ENCODE measurements at regions of chr7 and their contacts with region 1.

Region 1: GRCh38 chr7:105876091-105876963 is at the start of gene ATXN7L1:
- DNase-seq: peak; percentile 83 to 96 (median 92)
- ATAC-seq: peak; percentile 90
- H3K4me3 ChIP-seq: peak within 1 kb of the TSS; percentile 96
- H3K4me3 Mint-ChIP-seq: peak within 1 kb of the TSS; percentile 99
- H3K27ac ChIP-seq: peak within 1 kb of the TSS; percentile 55 to 77
- H3K27ac Mint-ChIP-seq: peak within 1 kb of the TSS; percentile 98
- H3K4me1 ChIP-seq: peaks cover 47% of the 10 kb centered on the region
- H3K4me1 Mint-ChIP-seq: peaks cover 81% of the 10 kb centered on the region
- H3K27me3 ChIP-seq: no peaks in the 10 kb centered on the region
- H3K27me3 Mint-ChIP-seq: no peaks in the 10 kb centered on the region
- CTCF ChIP-seq: peak; percentile 12
- total RNA-seq, gene ATXN7L1: 27.3 to 29.2 TPM

Region 2: GRCh38 chr7:105652359-105652993 is 223.9 kb before region 1 on chr7:
- CTCF ChIA-PET with region 1: interaction called, 3 read pairs
- POLR2A ChIA-PET with region 1: interaction called, 4 read pairs
- intact Hi-C with region 1: loop called (anchors 5 kb)
- DNase-seq: peak; percentile 55 to 74 (median 66)
- ATAC-seq: peak; percentile 94
- H3K4me3 ChIP-seq: no peak overlapping the region
- H3K4me3 Mint-ChIP-seq: no peak overlapping the region
- H3K27ac ChIP-seq: no peak overlapping the region
- H3K27ac Mint-ChIP-seq: no peak overlapping the region
- H3K4me1 ChIP-seq: peaks cover 10% of the 10 kb centered on the region
- H3K4me1 Mint-ChIP-seq: peaks cover 11% of the 10 kb centered on the region
- H3K27me3 ChIP-seq: no peaks in the 10 kb centered on the region
- H3K27me3 Mint-ChIP-seq: no peaks in the 10 kb centered on the region
- CTCF ChIP-seq: peak; percentile 75

Region 3: GRCh38 chr7:105759670-105760550 is 116.4 kb before region 1 on chr7:
- CTCF ChIA-PET with region 1: interaction called, 6 read pairs
- POLR2A ChIA-PET with region 1: interaction called, 8 read pairs
- intact Hi-C with region 1: loop called (anchors 2 to 5 kb)
- DNase-seq: peak in 7 of 14 experiments; percentile 8 to 54 (median 49)
- ATAC-seq: peak; percentile 25
- H3K4me3 ChIP-seq: no peak overlapping the region
- H3K4me3 Mint-ChIP-seq: no peak overlapping the region
- H3K27ac ChIP-seq: no peak overlapping the region
- H3K27ac Mint-ChIP-seq: peak overlapping the region; percentile 45
- H3K4me1 ChIP-seq: peaks cover 45% of the 10 kb centered on the region
- H3K4me1 Mint-ChIP-seq: peaks cover 35% of the 10 kb centered on the region
- H3K27me3 ChIP-seq: no peaks in the 10 kb centered on the region
- H3K27me3 Mint-ChIP-seq: no peaks in the 10 kb centered on the region
- CTCF ChIP-seq: peak; percentile 76

Region 4: GRCh38 chr7:105924945-105925344 is 48.6 kb after region 1 on chr7:
- CTCF ChIA-PET with region 1: interaction called, 4 read pairs
- POLR2A ChIA-PET with region 1: interaction called, 16 read pairs
- intact Hi-C with region 1: loop called in 1 of 2 experiments (anchors 5 kb)
- DNase-seq: peak in 6 of 14 experiments; percentile 2 to 66 (median 38)
- ATAC-seq: peak; percentile 87
- H3K4me3 ChIP-seq: no peak overlapping the region
- H3K4me3 Mint-ChIP-seq: peak overlapping the region; percentile 22
- H3K27ac ChIP-seq: no peak overlapping the region
- H3K27ac Mint-ChIP-seq: peak overlapping the region; percentile 87
- H3K4me1 ChIP-seq: peaks cover 16% of the 10 kb centered on the region
- H3K4me1 Mint-ChIP-seq: peaks cover 41% of the 10 kb centered on the region
- H3K27me3 ChIP-seq: no peaks in the 10 kb centered on the region
- H3K27me3 Mint-ChIP-seq: no peaks in the 10 kb centered on the region
- CTCF ChIP-seq: no peak

Region 5: GRCh38 chr7:106041140-106041717 is 164.9 kb after region 1 on chr7:
- CTCF ChIA-PET with region 1: no interaction called
- POLR2A ChIA-PET with region 1: interaction called, 7 read pairs
- intact Hi-C with region 1: loop called (anchors 2 kb)
- DNase-seq: peak in 5 of 14 experiments; percentile 23 to 61 (median 50)
- ATAC-seq: peak; percentile 22
- H3K4me3 ChIP-seq: no peak overlapping the region
- H3K4me3 Mint-ChIP-seq: no peak overlapping the region
- H3K27ac ChIP-seq: no peak overlapping the region
- H3K27ac Mint-ChIP-seq: peak overlapping the region; percentile 67
- H3K4me1 ChIP-seq: peaks cover 29% of the 10 kb centered on the region
- H3K4me1 Mint-ChIP-seq: peaks cover 50% of the 10 kb centered on the region
- H3K27me3 ChIP-seq: peaks cover 0 to 4% of the 10 kb centered on the region in 2 experiments
- H3K27me3 Mint-ChIP-seq: peaks cover 4% of the 10 kb centered on the region
- CTCF ChIP-seq: peak; percentile 57